ENCODE measurements at regions of chr21 and their contacts with region 1.

Region 1: GRCh38 chr21:42145569-42146272 is 73.2 kb upstream of the ABCG1 start:
- DNase-seq: peak; percentile 38 to 84 (median 68)
- ATAC-seq: peak; percentile 90
- H3K4me3 ChIP-seq: no peak overlapping the region
- H3K4me3 Mint-ChIP-seq: no peak overlapping the region
- H3K27ac ChIP-seq: no peak overlapping the region
- H3K27ac Mint-ChIP-seq: peak overlapping the region; percentile 32
- H3K4me1 ChIP-seq: peaks cover 8% of the 10 kb centered on the region
- H3K4me1 Mint-ChIP-seq: peaks cover 9% of the 10 kb centered on the region
- H3K27me3 ChIP-seq: no peaks in the 10 kb centered on the region
- H3K27me3 Mint-ChIP-seq: no peaks in the 10 kb centered on the region
- CTCF ChIP-seq: peak; percentile 80

Region 2: GRCh38 chr21:41993744-41994143 is 152.0 kb before region 1 on chr21:
- CTCF ChIA-PET with region 1: no interaction called
- POLR2A ChIA-PET with region 1: no interaction called
- intact Hi-C with region 1: no loop called
- DNase-seq: no peak
- ATAC-seq: no peak
- H3K4me3 ChIP-seq: no peak overlapping the region
- H3K4me3 Mint-ChIP-seq: no peak overlapping the region
- H3K27ac ChIP-seq: no peak overlapping the region
- H3K27ac Mint-ChIP-seq: no peak overlapping the region
- H3K4me1 ChIP-seq: no peaks in the 10 kb centered on the region
- H3K4me1 Mint-ChIP-seq: no peaks in the 10 kb centered on the region
- H3K27me3 ChIP-seq: no peaks in the 10 kb centered on the region
- H3K27me3 Mint-ChIP-seq: no peaks in the 10 kb centered on the region
- CTCF ChIP-seq: no peak

Region 3: GRCh38 chr21:42009831-42010523 is 135.7 kb before region 1 on chr21 and contains the start of gene ZBTB21:
- CTCF ChIA-PET with region 1: no interaction called
- POLR2A ChIA-PET with region 1: no interaction called
- intact Hi-C with region 1: no loop called
- DNase-seq: peak; percentile 95 to 99 (median 98)
- ATAC-seq: peak; percentile 75
- H3K4me3 ChIP-seq: peak within 1 kb of the TSS; percentile 64 to 95
- H3K4me3 Mint-ChIP-seq: peak within 1 kb of the TSS; percentile 98
- H3K27ac ChIP-seq: peak within 1 kb of the TSS; percentile 96 to 100
- H3K27ac Mint-ChIP-seq: peak within 1 kb of the TSS; percentile 100
- H3K4me1 ChIP-seq: peaks cover 5% of the 10 kb centered on the region
- H3K4me1 Mint-ChIP-seq: peaks cover 38% of the 10 kb centered on the region
- H3K27me3 ChIP-seq: no peaks in the 10 kb centered on the region
- H3K27me3 Mint-ChIP-seq: no peaks in the 10 kb centered on the region
- CTCF ChIP-seq: no peak
- total RNA-seq, gene ZBTB21: 130 to 141 TPM

Region 4: GRCh38 chr21:42156690-42157577 is 11.2 kb after region 1 on chr21:
- CTCF ChIA-PET with region 1: interaction called, 22 read pairs
- POLR2A ChIA-PET with region 1: no interaction called
- intact Hi-C with region 1: no loop called
- DNase-seq: no peak
- ATAC-seq: no peak
- H3K4me3 ChIP-seq: no peak overlapping the region
- H3K4me3 Mint-ChIP-seq: no peak overlapping the region
- H3K27ac ChIP-seq: no peak overlapping the region
- H3K27ac Mint-ChIP-seq: no peak overlapping the region
- H3K4me1 ChIP-seq: peaks cover 30% of the 10 kb centered on the region
- H3K4me1 Mint-ChIP-seq: peaks cover 23% of the 10 kb centered on the region
- H3K27me3 ChIP-seq: no peaks in the 10 kb centered on the region
- H3K27me3 Mint-ChIP-seq: no peaks in the 10 kb centered on the region
- CTCF ChIP-seq: no peak

Region 5: DNA sequence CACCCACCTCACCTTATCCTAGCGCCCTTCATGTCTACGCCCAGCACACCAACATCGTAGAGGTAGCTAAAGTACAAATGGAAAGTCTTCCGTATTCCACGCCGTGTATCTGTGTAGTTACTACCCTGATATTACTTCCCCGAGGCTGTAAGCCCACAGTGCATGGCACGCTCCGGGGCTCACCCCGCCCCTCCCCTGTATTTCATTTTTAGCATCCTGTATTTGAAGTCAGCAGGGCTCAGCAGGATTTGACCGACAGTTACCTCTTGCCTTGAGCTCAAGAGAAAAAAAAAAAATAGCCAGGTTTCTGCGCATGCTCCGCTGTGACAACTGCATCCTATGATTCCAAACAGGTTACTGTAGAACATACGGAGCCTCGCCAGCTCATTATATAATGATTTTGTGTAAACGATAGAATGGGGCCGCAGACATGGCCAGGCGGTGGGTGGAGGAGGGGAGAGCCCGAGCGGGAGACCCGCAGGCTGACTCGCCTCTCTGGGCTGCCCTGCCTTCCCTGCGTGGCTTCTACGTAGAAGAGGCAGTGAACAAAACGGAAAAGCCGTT is 74.5 kb after region 1 on chr21:
- CTCF ChIA-PET with region 1: interaction called, 6 read pairs
- POLR2A ChIA-PET with region 1: no interaction called
- intact Hi-C with region 1: loop called in 1 of 2 experiments (anchors 5 kb)
- DNase-seq: peak; percentile 34 to 96 (median 70)
- ATAC-seq: peak; percentile 87
- H3K4me3 ChIP-seq: peak overlapping the region; percentile 84 to 88
- H3K4me3 Mint-ChIP-seq: peak overlapping the region; percentile 89
- H3K27ac ChIP-seq: peak overlapping the region; percentile 74 to 91
- H3K27ac Mint-ChIP-seq: peak overlapping the region; percentile 94
- H3K4me1 ChIP-seq: peaks cover 11% of the 10 kb centered on the region
- H3K4me1 Mint-ChIP-seq: peaks cover 32% of the 10 kb centered on the region
- H3K27me3 ChIP-seq: no peaks in the 10 kb centered on the region
- H3K27me3 Mint-ChIP-seq: no peaks in the 10 kb centered on the region
- CTCF ChIP-seq: no peak

Region 6: GRCh38 chr21:42248783-42249597 is 103.3 kb after region 1 on chr21:
- CTCF ChIA-PET with region 1: interaction called, 12 read pairs
- POLR2A ChIA-PET with region 1: no interaction called
- intact Hi-C with region 1: no loop called
- DNase-seq: no peak
- ATAC-seq: no peak
- H3K4me3 ChIP-seq: no peak overlapping the region
- H3K4me3 Mint-ChIP-seq: no peak overlapping the region
- H3K27ac ChIP-seq: no peak overlapping the region
- H3K27ac Mint-ChIP-seq: peak overlapping the region; percentile 6
- H3K4me1 ChIP-seq: peaks cover 7% of the 10 kb centered on the region
- H3K4me1 Mint-ChIP-seq: peaks cover 31% of the 10 kb centered on the region
- H3K27me3 ChIP-seq: no peaks in the 10 kb centered on the region
- H3K27me3 Mint-ChIP-seq: no peaks in the 10 kb centered on the region
- CTCF ChIP-seq: no peak

Region 7: DNA sequence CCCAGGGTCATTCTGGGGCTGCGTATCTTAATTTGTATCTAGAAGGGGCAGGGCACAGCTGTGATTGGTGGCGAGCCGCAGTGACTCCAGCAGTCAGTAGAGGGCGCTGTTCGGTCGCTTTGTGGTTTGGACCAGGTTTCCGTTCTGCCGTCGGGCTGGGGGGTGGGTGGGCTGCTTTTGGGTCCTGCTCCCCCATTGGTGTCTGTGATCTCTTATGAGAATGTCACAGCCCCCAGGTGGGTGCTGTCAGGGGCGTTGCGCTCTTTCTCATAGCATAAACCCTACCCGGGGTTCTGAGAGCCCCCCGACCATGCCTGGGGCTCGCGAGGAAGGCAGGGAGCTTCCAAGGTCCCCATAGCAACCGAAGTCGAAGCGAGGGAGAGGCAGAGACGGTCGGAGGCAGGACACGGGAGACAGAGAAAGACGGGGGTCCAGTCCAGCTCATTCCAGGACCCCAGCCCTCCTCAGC is 164.1 kb after region 1 on chr21:
- CTCF ChIA-PET with region 1: interaction called, 6 read pairs
- POLR2A ChIA-PET with region 1: no interaction called
- intact Hi-C with region 1: loop called in 1 of 2 experiments (anchors 1 kb)
- DNase-seq: peak; percentile 48 to 80 (median 73)
- ATAC-seq: peak; percentile 75
- H3K4me3 ChIP-seq: no peak overlapping the region
- H3K4me3 Mint-ChIP-seq: no peak overlapping the region
- H3K27ac ChIP-seq: no peak overlapping the region
- H3K27ac Mint-ChIP-seq: no peak overlapping the region
- H3K4me1 ChIP-seq: peaks cover 18% of the 10 kb centered on the region
- H3K4me1 Mint-ChIP-seq: peaks cover 8% of the 10 kb centered on the region
- H3K27me3 ChIP-seq: peaks cover 0 to 2% of the 10 kb centered on the region in 2 experiments
- H3K27me3 Mint-ChIP-seq: peaks cover 5% of the 10 kb centered on the region
- CTCF ChIP-seq: peak; percentile 70

Region 8: GRCh38 chr21:42537106-42537742 is 391.5 kb after region 1 on chr21:
- CTCF ChIA-PET with region 1: no interaction called
- POLR2A ChIA-PET with region 1: no interaction called
- intact Hi-C with region 1: loop called in 1 of 2 experiments (anchors 2 kb)
- DNase-seq: peak in 2 of 9 experiments; percentile 43 to 53
- ATAC-seq: peak; percentile 66
- H3K4me3 ChIP-seq: no peak overlapping the region
- H3K4me3 Mint-ChIP-seq: no peak overlapping the region
- H3K27ac ChIP-seq: no peak overlapping the region
- H3K27ac Mint-ChIP-seq: no peak overlapping the region
- H3K4me1 ChIP-seq: peaks cover 6% of the 10 kb centered on the region
- H3K4me1 Mint-ChIP-seq: peaks cover 22% of the 10 kb centered on the region
- H3K27me3 ChIP-seq: no peaks in the 10 kb centered on the region
- H3K27me3 Mint-ChIP-seq: no peaks in the 10 kb centered on the region
- CTCF ChIP-seq: no peak